ENCODE measurements at regions of chr3 and their contacts with region 1.

Region 1: GRCh38 chr3:8027954-8028353 is 473.7 kb upstream of the LMCD1 start:
- DNase-seq: no peak
- ATAC-seq: no peak

Region 2: GRCh38 chr3:7744850-7745249 is 283.1 kb before region 1 on chr3:
- intact Hi-C with region 1: loop called (anchors 10 kb)
- DNase-seq: no peak
- ATAC-seq: no peak

Region 3: GRCh38 chr3:7953449-7954015 is 74.4 kb before region 1 on chr3:
- intact Hi-C with region 1: loop called (anchors 10 kb)
- DNase-seq: no peak
- ATAC-seq: no peak

Measured in left ventricle myocardium superior (tissue), 1 donor.